CD4-positive, alpha-beta memory T cell (primary cell): ENCODE measurements at regions of chrX and their contacts with region 1.

Region 1: GRCh38 chrX:130916636-130917422 is 13.8 kb upstream of the ENOX2 start:
- DNase-seq: peak; percentile 33 to 41 (median 38)
- H3K4me3 ChIP-seq: no peak overlapping the region
- H3K4me3 Mint-ChIP-seq: no peak overlapping the region
- H3K27ac ChIP-seq: no peak overlapping the region
- H3K27ac Mint-ChIP-seq: no peak overlapping the region
- H3K4me1 ChIP-seq: no peaks in the 10 kb centered on the region
- H3K4me1 Mint-ChIP-seq: no peaks in the 10 kb centered on the region
- H3K27me3 ChIP-seq: no peaks in the 10 kb centered on the region
- H3K27me3 Mint-ChIP-seq: peaks cover 2% of the 10 kb centered on the region in 2 donors

Region 2: GRCh38 chrX:129600981-129601424 is 1315.8 kb before region 1 on chrX:
- CTCF ChIA-PET with region 1: no interaction called
- POLR2A ChIA-PET with region 1: no interaction called
- intact Hi-C with region 1: loop called (anchors 5 kb)
- DNase-seq: peak in 3 of 5 donors; percentile 9 to 21 (median 17)
- H3K4me3 ChIP-seq: no peak overlapping the region
- H3K4me3 Mint-ChIP-seq: no peak overlapping the region
- H3K27ac ChIP-seq: no peak overlapping the region
- H3K27ac Mint-ChIP-seq: peak overlapping the region in 1 of 7 donors; percentile 0
- H3K4me1 ChIP-seq: peaks cover 12% of the 10 kb centered on the region
- H3K4me1 Mint-ChIP-seq: peaks cover 5 to 21% (median 15%) of the 10 kb centered on the region in 4 donors
- H3K27me3 ChIP-seq: no peaks in the 10 kb centered on the region
- H3K27me3 Mint-ChIP-seq: no peaks in the 10 kb centered on the region

Region 3: GRCh38 chrX:130330706-130331105 is 586.1 kb before region 1 on chrX:
- CTCF ChIA-PET with region 1: interaction called, 22 read pairs
- POLR2A ChIA-PET with region 1: no interaction called
- intact Hi-C with region 1: no loop called
- DNase-seq: peak in 4 of 5 donors; percentile 12 to 34 (median 20)
- H3K4me3 ChIP-seq: no peak overlapping the region
- H3K4me3 Mint-ChIP-seq: no peak overlapping the region
- H3K27ac ChIP-seq: no peak overlapping the region
- H3K27ac Mint-ChIP-seq: no peak overlapping the region
- H3K4me1 ChIP-seq: no peaks in the 10 kb centered on the region
- H3K4me1 Mint-ChIP-seq: peaks cover 0 to 2% (median 0%) of the 10 kb centered on the region in 4 donors
- H3K27me3 ChIP-seq: no peaks in the 10 kb centered on the region
- H3K27me3 Mint-ChIP-seq: peaks cover 3 to 14% of the 10 kb centered on the region in 2 donors

Region 4: GRCh38 chrX:130393451-130394074 is 523.3 kb before region 1 on chrX:
- CTCF ChIA-PET with region 1: no interaction called
- POLR2A ChIA-PET with region 1: no interaction called
- intact Hi-C with region 1: loop called (anchors 5 kb)
- DNase-seq: no peak
- H3K4me3 ChIP-seq: no peak overlapping the region
- H3K4me3 Mint-ChIP-seq: no peak overlapping the region
- H3K27ac ChIP-seq: no peak overlapping the region
- H3K27ac Mint-ChIP-seq: no peak overlapping the region
- H3K4me1 ChIP-seq: no peaks in the 10 kb centered on the region
- H3K4me1 Mint-ChIP-seq: no peaks in the 10 kb centered on the region
- H3K27me3 ChIP-seq: no peaks in the 10 kb centered on the region
- H3K27me3 Mint-ChIP-seq: peaks cover 9 to 13% of the 10 kb centered on the region in 2 donors

Region 5: GRCh38 chrX:130539721-130540321 is 377.0 kb before region 1 on chrX:
- CTCF ChIA-PET with region 1: interaction called, 41 read pairs
- POLR2A ChIA-PET with region 1: no interaction called
- intact Hi-C with region 1: no loop called
- DNase-seq: peak in 4 of 5 donors; percentile 15 to 25 (median 20)
- H3K4me3 ChIP-seq: no peak overlapping the region
- H3K4me3 Mint-ChIP-seq: no peak overlapping the region
- H3K27ac ChIP-seq: no peak overlapping the region
- H3K27ac Mint-ChIP-seq: no peak overlapping the region
- H3K4me1 ChIP-seq: no peaks in the 10 kb centered on the region
- H3K4me1 Mint-ChIP-seq: no peaks in the 10 kb centered on the region
- H3K27me3 ChIP-seq: no peaks in the 10 kb centered on the region
- H3K27me3 Mint-ChIP-seq: peaks cover 0 to 10% of the 10 kb centered on the region in 2 donors